B cell (primary cell): ENCODE measurements at regions of chr11 and their contacts with region 1.

Region 1: GRCh38 chr11:59158206-59159068 is 13.5 kb upstream of the DTX4 start:
- DNase-seq: peak; percentile 86
- ATAC-seq: peak; percentile 97
- H3K4me3 ChIP-seq: no peak overlapping the region
- H3K4me3 Mint-ChIP-seq: peak overlapping the region; percentile 75
- H3K27ac ChIP-seq: no peak overlapping the region
- H3K27ac Mint-ChIP-seq: peak overlapping the region; percentile 73
- H3K4me1 ChIP-seq: peaks cover 11 to 14% of the 10 kb centered on the region in 2 donors
- H3K4me1 Mint-ChIP-seq: peaks cover 19% of the 10 kb centered on the region
- H3K27me3 ChIP-seq: no peaks in the 10 kb centered on the region
- H3K27me3 Mint-ChIP-seq: no peaks in the 10 kb centered on the region
- CTCF ChIP-seq: peak; percentile 94

Region 2: DNA sequence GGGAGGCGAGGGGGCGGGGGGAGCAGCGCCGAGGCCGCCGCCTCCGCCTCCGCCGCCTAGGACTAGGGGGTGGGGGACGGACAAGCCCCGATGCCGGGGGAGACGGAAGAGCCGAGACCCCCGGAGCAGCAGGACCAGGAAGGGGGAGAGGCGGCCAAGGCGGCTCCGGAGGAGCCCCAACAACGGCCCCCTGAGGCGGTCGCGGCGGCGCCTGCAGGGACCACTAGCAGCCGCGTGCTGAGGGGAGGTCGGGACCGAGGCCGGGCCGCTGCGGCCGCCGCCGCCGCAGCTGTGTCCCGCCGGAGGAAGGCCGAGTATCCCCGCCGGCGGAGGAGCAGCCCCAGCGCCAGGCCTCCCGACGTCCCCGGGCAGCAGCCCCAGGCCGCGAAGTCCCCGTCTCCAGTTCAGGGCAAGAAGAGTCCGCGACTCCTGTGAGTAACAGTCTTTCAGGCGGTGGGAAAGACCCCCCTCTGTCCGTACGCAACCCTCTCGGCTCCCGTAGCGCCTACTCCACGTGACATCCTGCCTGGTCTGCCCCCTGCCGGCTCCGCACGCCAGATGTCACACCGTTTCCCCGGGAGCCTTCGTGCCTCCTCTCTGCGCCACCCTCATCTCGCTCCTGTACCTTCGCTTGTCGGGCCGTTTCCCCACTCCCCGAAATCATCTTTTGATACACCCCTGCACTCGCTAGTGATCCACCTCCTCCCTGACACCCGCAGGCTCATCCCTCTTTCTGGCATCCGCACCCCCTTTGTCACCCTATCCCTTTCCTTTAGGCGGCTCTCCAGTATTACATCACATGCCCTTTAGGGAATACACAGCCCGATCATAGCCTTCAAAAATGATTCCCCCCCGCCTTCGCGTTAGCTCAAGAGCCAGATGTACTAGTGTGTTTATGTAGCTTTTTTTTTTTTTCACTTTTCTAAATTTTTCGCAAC is 579.0 kb before region 1 on chr11:
- CTCF ChIA-PET with region 1: interaction called, 16 read pairs
- POLR2A ChIA-PET with region 1: no interaction called
- intact Hi-C with region 1: no loop called
- DNase-seq: peak; percentile 96
- ATAC-seq: peak; percentile 37
- H3K4me3 ChIP-seq: peak overlapping the region; percentile 71 to 100 (median 99)
- H3K4me3 Mint-ChIP-seq: peak overlapping the region; percentile 97
- H3K27ac ChIP-seq: peak overlapping the region; percentile 89 to 100
- H3K27ac Mint-ChIP-seq: peak overlapping the region; percentile 100
- H3K4me1 ChIP-seq: peaks cover 48 to 52% of the 10 kb centered on the region in 2 donors
- H3K4me1 Mint-ChIP-seq: peaks cover 64% of the 10 kb centered on the region
- H3K27me3 ChIP-seq: no peaks in the 10 kb centered on the region
- H3K27me3 Mint-ChIP-seq: no peaks in the 10 kb centered on the region
- CTCF ChIP-seq: peak; percentile 79

Region 3: DNA sequence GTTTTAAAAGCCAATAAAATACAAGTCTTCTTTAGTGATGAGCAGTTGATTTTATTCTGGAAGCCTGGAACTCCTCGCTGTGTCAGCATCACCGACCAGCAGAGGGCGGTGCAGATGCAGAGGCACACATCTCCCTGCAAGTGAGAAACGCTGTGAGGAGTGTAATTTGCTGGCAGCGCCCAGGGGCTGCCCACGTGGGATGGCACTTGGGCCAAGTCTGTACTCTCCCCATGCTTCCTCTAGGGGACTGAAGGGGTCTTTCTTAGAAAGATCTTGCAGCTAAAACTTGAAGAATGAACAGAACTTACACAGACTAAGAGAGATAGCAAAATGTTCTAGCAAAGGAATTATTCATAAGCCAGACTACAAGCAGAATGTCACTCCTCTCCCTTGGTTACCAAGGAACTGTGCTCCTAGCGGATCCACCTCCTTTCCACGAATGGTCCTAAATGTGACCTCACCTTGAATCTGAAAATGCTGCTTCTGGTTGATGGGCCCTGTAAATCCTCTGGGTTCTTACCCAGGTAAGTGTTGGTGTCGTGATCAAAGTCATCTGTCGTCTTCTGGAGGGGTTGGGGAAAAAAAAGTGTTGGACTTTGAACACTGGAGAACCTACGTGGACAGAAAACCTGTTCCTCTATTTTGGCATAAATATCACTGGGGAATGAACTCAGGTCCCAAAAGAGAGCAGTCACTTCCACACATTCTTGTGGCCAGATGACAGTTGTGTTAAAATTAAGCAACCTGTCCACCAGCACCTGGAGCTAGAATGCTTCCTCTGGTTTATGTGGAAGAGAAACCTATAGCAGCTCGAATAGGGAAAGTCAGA is 504.1 kb before region 1 on chr11:
- CTCF ChIA-PET with region 1: interaction called, 99 read pairs
- POLR2A ChIA-PET with region 1: no interaction called
- intact Hi-C with region 1: loop called (anchors 1 kb)
- DNase-seq: peak; percentile 81
- ATAC-seq: peak; percentile 98
- H3K4me3 ChIP-seq: no peak overlapping the region
- H3K4me3 Mint-ChIP-seq: no peak overlapping the region
- H3K27ac ChIP-seq: no peak overlapping the region
- H3K27ac Mint-ChIP-seq: no peak overlapping the region
- H3K4me1 ChIP-seq: peaks cover 0 to 5% of the 10 kb centered on the region in 2 donors
- H3K4me1 Mint-ChIP-seq: peaks cover 4% of the 10 kb centered on the region
- H3K27me3 ChIP-seq: no peaks in the 10 kb centered on the region
- H3K27me3 Mint-ChIP-seq: no peaks in the 10 kb centered on the region
- CTCF ChIP-seq: peak; percentile 93

Region 4: GRCh38 chr11:58958500-58958899 is 199.9 kb before region 1 on chr11:
- CTCF ChIA-PET with region 1: interaction called, 41 read pairs
- POLR2A ChIA-PET with region 1: no interaction called
- intact Hi-C with region 1: loop called (anchors 1 kb)
- DNase-seq: peak; percentile 80
- ATAC-seq: peak; percentile 81
- H3K4me3 ChIP-seq: no peak overlapping the region
- H3K4me3 Mint-ChIP-seq: no peak overlapping the region
- H3K27ac ChIP-seq: no peak overlapping the region
- H3K27ac Mint-ChIP-seq: no peak overlapping the region
- H3K4me1 ChIP-seq: peaks cover 0 to 4% of the 10 kb centered on the region in 2 donors
- H3K4me1 Mint-ChIP-seq: peaks cover 4% of the 10 kb centered on the region
- H3K27me3 ChIP-seq: no peaks in the 10 kb centered on the region
- H3K27me3 Mint-ChIP-seq: no peaks in the 10 kb centered on the region
- CTCF ChIP-seq: peak; percentile 81

Region 5: DNA sequence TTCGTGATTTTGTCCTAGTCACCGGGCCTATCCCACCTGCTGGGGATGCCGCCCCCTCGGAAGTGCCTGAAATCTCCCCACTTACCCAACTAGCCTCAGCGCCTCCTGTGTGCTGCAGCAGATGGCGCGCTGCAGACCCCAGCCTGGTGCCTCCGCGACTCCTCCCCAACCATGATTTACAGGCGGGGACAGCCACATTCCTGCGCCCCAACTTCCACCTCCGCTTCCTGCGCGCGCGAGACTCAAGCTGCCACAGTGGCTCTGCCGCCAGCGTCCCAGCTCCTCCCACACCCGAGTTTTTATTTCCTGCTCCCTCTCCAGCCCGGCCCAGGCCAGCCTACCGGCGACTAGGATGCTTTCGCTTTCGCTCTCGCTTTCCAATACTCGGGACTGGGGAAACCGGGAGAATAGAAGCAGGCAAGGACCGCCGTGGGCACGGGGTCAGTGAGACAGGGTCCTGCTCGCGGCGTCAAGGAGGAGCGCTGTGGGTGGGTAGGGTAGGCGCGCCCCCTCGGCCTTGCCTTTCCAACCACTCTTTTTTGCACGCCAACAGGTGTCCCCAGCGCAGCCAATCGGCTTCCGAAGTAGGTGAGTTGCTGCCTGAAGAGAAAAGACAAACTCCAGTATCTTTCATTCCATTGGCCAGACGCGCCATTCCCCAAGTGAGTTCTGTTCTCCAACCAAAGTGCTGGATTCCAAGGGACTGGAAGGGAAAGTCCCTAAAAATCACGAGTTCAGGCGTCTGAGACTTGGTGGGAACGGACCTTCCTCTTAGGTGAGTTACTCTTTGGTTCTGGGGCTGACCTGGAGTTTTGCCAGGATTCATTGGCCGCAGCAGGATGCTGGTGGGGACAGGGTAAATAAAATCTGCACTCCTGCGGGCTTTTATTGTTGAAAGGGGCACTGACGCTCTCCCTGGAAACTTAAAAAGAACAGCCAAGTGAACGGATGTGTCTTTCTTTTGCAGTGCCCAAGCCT is 15.6 kb before region 1 on chr11 and contains the start of gene FAM111A:
- CTCF ChIA-PET with region 1: interaction called, 94 read pairs
- POLR2A ChIA-PET with region 1: interaction called, 13 read pairs
- intact Hi-C with region 1: loop called (anchors 1 kb)
- DNase-seq: peak; percentile 91
- ATAC-seq: peak; percentile 74
- H3K4me3 ChIP-seq: peak within 1 kb of the TSS; percentile 82 to 94 (median 89)
- H3K4me3 Mint-ChIP-seq: peak within 1 kb of the TSS; percentile 97
- H3K27ac ChIP-seq: peak within 1 kb of the TSS; percentile 88 to 90
- H3K27ac Mint-ChIP-seq: peak within 1 kb of the TSS; percentile 87
- H3K4me1 ChIP-seq: peaks cover 40 to 45% of the 10 kb centered on the region in 2 donors
- H3K4me1 Mint-ChIP-seq: peaks cover 68% of the 10 kb centered on the region
- H3K27me3 ChIP-seq: no peaks in the 10 kb centered on the region
- H3K27me3 Mint-ChIP-seq: no peaks in the 10 kb centered on the region
- CTCF ChIP-seq: no peak
- total RNA-seq, gene FAM111A: 120 and 126 TPM in 2 replicates

Region 6: GRCh38 chr11:59615637-59616395 is 457.4 kb after region 1 on chr11 and contains the start of gene OSBP:
- CTCF ChIA-PET with region 1: no interaction called
- POLR2A ChIA-PET with region 1: no interaction called
- intact Hi-C with region 1: no loop called
- DNase-seq: peak; percentile 100
- ATAC-seq: peak; percentile 76
- H3K4me3 ChIP-seq: peak within 1 kb of the TSS; percentile 47 to 86 (median 77)
- H3K4me3 Mint-ChIP-seq: peak within 1 kb of the TSS; percentile 89
- H3K27ac ChIP-seq: peak within 1 kb of the TSS; percentile 92 to 97
- H3K27ac Mint-ChIP-seq: peak within 1 kb of the TSS; percentile 92
- H3K4me1 ChIP-seq: peaks cover 20% of the 10 kb centered on the region in 2 donors
- H3K4me1 Mint-ChIP-seq: peaks cover 43% of the 10 kb centered on the region
- H3K27me3 ChIP-seq: no peaks in the 10 kb centered on the region
- H3K27me3 Mint-ChIP-seq: no peaks in the 10 kb centered on the region
- CTCF ChIP-seq: no peak
- total RNA-seq, gene OSBP: 40.2 and 42.5 TPM in 2 replicates